Activated T-helper 2 cell treated with anti-CD3 and anti-CD28 coated beads, Interferon-gamma antibody, Interleukin-2, Interleukin-4, amounts not matched to agents 10 μg/mL and 5 μg/mL and 100 μg/mL, durations not matched to agents 14 hours and 24 hours and 36 hours (primary cell): ENCODE measurements at regions of chr6 and their contacts with region 1.

Region 1: GRCh38 chr6:3742426-3743344 is 8.8 kb downstream of the PXDC1 start:
- DNase-seq: peak; percentile 78
- H3K4me3 Mint-ChIP-seq: peak overlapping the region; percentile 8
- H3K27ac Mint-ChIP-seq: peak overlapping the region; percentile 27
- H3K4me1 Mint-ChIP-seq: peaks cover 6% of the 10 kb centered on the region
- H3K27me3 Mint-ChIP-seq: peaks cover 25% of the 10 kb centered on the region

Region 2: GRCh38 chr6:3623451-3624249 is 119.0 kb before region 1 on chr6:
- intact Hi-C with region 1: no loop called
- DNase-seq: no peak
- H3K4me3 Mint-ChIP-seq: no peak overlapping the region
- H3K27ac Mint-ChIP-seq: no peak overlapping the region
- H3K4me1 Mint-ChIP-seq: peaks cover 2% of the 10 kb centered on the region
- H3K27me3 Mint-ChIP-seq: peaks cover 21% of the 10 kb centered on the region

Region 3: DNA sequence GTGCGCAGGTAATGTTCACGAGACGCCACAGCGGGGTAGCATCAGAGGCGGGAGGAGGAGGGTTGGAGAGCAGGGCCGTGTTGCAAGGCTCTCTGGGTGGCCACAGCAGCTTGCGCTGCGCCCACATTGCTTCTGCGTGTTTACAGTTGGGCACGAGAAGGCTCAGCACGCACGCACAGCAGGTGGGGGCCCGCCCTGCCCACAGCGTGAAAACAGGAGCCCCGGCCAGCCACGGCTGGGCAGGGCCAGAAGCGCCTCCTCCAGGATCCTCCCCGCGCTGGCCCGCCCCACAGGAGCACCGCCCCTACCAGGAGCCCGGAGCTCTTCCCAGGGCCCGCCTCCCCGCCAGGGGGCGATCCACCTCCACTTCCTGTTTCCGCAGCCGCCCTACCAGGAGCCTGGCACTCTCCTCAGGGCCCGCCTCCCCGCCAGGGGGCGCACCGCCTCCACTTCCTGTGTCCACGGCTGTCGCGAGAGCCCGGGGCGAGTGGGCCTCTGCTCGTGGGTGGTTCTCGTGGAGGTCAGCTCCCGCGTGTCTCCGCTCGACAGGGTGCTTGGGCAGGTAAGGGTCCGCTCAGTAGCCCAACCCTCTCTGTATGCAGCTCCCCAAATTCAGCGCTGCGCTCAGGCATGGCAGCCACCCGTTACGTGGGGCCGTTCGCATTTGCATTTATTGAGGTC is 106.4 kb after region 1 on chr6 and contains the start of gene FAM50B:
- intact Hi-C with region 1: loop called (anchors 2 kb)
- DNase-seq: peak; percentile 89
- H3K4me3 Mint-ChIP-seq: peak within 1 kb of the TSS; percentile 69
- H3K27ac Mint-ChIP-seq: peak within 1 kb of the TSS; percentile 70
- H3K4me1 Mint-ChIP-seq: peaks cover 22% of the 10 kb centered on the region
- H3K27me3 Mint-ChIP-seq: no peaks in the 10 kb centered on the region
- total RNA-seq, gene FAM50B: 9.1 and 10.0 TPM in 2 replicates

Region 4: DNA sequence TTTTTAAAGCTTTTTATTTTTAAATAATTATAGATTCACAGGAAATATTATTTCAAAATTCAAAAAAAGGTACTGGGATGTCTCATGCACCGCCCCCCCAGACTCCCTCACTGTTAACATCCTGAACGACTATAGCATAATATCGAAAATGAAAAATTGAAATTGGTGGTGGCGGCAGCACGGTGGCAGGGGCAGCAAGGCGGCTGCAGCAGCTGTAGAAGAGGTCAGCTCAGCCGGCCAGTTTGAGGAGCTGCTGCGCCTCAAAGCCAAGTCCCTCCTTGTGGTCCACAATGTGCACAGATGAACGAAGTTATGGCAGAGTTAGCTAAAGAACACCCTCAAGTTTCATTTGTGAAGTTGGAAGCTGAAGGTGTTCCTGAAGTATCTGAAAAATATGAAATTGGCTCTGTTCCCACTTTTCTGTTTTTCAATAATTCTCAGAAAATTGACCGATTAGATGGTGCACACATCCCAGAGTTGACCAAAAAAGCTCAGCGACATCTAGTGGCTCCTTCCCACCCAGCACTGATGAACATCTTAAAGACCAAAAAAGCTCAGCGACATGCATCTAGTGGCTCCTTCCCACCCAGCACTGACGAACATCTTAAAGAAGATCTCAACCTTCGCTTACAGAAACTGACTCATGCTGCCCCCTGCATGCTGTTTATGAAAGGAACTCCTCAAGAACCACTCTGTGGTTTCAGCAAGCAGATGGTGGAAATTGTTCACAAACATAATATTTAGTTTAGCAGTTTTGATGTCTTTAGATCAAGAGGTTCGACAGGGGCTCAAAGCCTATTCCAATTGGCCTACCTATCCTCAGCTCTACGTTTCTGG is 235.4 kb after region 1 on chr6:
- intact Hi-C with region 1: loop called (anchors 1 kb)
- DNase-seq: peak; percentile 35
- H3K4me3 Mint-ChIP-seq: no peak overlapping the region
- H3K27ac Mint-ChIP-seq: no peak overlapping the region
- H3K4me1 Mint-ChIP-seq: peaks cover 10% of the 10 kb centered on the region
- H3K27me3 Mint-ChIP-seq: peaks cover 17% of the 10 kb centered on the region

Region 5: GRCh38 chr6:4008324-4009047 is 265.8 kb after region 1 on chr6:
- intact Hi-C with region 1: loop called (anchors 1 kb)
- DNase-seq: no peak
- H3K4me3 Mint-ChIP-seq: no peak overlapping the region
- H3K27ac Mint-ChIP-seq: no peak overlapping the region
- H3K4me1 Mint-ChIP-seq: peaks cover 49% of the 10 kb centered on the region
- H3K27me3 Mint-ChIP-seq: no peaks in the 10 kb centered on the region